AG04450 (cell line): ENCODE measurements at regions of chr3 and their contacts with region 1.

Region 1: DNA sequence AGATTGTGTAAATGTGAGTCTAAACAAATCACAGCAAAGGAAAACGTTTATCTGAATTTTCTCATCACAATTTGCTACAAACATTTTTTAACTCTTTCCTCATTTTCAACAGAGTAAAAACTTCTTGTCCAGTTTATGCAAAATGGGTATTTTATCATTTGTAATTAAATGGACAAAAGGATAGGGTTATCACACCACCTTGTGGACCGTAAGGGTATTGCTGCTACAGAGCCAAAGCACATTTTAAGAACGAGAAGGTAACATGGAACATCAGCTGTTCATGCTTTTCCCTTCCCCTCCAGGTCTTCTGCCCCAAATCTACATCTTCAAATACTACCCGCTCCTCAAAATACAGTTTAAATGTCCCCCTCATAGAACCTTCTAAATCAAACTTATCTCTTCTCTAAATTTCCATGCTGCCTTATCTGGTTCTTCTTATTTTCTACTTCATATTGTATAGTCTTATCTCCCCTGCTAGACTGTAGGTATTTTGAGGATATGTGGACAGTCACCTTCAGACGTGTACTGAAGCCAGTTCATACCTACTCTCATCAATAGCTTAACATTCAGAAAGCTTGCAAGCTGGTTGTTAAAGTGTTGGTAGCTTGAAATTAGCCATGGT is 12.8 kb upstream of the SETMAR start:
- DNase-seq: no peak
- H3K4me3 ChIP-seq: no peak overlapping the region
- H3K27ac ChIP-seq: no peak overlapping the region
- H3K27me3 ChIP-seq: no peaks in the 10 kb centered on the region
- CTCF ChIP-seq: peak; percentile 93

Region 2: GRCh38 chr3:3495611-3496010 is 794.8 kb before region 1 on chr3:
- CTCF ChIA-PET with region 1: no interaction called
- POLR2A ChIA-PET with region 1: no interaction called
- DNase-seq: no peak
- H3K4me3 ChIP-seq: no peak overlapping the region
- H3K27ac ChIP-seq: no peak overlapping the region
- H3K27me3 ChIP-seq: no peaks in the 10 kb centered on the region
- CTCF ChIP-seq: no peak

Region 3: GRCh38 chr3:4271834-4272233 is 18.5 kb before region 1 on chr3:
- CTCF ChIA-PET with region 1: interaction called, 10 read pairs
- POLR2A ChIA-PET with region 1: no interaction called
- DNase-seq: no peak
- H3K4me3 ChIP-seq: no peak overlapping the region
- H3K27ac ChIP-seq: no peak overlapping the region
- H3K27me3 ChIP-seq: no peaks in the 10 kb centered on the region
- CTCF ChIP-seq: peak; percentile 40

Region 4: DNA sequence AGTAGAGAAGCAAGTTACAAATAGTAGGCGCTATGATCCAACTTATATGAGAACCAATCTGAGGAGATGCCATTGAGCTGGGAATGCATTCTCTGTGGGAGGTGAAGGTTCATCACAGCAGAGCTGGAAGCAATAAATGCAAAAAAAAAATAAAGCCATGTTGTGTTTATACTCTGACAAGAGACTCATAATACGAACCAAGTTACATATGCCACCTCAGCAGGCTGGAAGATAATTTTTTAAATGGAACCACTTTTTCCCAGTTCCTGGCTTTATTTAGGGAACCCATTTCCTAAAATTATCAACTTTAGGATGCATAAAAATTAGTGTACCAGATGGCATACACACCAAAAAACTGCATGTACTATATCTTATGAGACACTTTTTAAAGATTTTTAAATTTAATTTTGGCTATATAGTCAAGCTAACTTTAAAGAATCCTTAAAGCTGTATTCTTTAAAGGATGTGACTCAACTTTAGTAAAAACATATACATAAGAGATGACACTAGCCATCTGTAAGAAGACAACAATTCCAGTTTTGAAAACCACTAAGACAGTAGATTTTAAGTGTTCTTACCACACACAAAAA is 10.8 kb before region 1 on chr3:
- CTCF ChIA-PET with region 1: interaction called, 12 read pairs
- POLR2A ChIA-PET with region 1: no interaction called
- DNase-seq: no peak
- H3K4me3 ChIP-seq: no peak overlapping the region
- H3K27ac ChIP-seq: no peak overlapping the region
- H3K27me3 ChIP-seq: no peaks in the 10 kb centered on the region
- CTCF ChIP-seq: no peak

Region 5: DNA sequence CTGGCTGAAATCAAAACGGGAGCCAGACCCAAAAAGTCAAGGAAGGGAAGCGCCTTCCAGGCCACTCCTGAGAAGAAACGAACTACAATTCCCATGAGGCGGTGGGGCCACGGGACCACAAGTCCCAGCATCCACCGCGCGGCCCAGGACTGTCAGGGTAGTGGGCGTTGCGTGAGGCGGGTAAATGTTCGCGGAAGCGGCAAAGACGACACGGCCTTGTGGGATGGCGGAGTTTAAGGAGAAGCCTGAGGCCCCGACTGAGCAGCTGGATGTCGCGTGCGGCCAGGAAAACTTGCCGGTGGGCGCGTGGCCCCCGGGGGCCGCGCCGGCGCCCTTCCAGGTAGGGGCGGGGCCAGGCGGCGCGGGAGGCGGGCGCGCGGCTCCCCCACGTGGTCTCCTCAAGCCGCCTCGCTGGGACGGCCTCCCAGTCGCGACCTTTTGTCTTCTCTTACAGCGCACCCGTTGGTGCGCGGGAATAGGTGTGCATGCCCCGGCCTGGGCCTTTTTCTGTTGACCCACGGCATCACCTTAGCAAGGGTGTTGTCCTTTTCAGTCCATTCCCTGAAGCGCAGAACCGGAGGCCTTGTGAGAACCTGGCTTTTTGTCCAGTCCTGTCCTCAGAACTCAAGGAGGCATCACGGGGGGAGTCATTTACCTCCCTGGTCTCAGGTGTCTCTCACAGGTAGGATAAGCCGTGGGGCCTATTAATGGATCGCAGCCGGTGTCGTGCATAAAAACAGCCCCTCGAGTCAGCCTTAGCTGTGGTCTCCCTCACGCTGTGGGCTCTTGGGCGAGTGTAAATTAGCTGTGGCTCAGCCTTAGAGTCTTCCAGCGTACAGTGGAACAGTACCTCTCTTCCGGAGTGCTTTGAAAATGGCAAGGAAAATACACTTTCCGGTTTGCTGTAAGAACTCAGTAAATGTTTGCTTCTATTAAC is 13.1 kb after region 1 on chr3 and contains the start of gene SETMAR:
- CTCF ChIA-PET with region 1: interaction called, 15 read pairs
- POLR2A ChIA-PET with region 1: no interaction called
- DNase-seq: peak; percentile 50
- H3K4me3 ChIP-seq: peak within 1 kb of the TSS; percentile 84
- H3K27ac ChIP-seq: peak within 1 kb of the TSS; percentile 67
- H3K27me3 ChIP-seq: no peaks in the 10 kb centered on the region
- CTCF ChIP-seq: no peak
- polyA plus RNA-seq, gene SETMAR: 15.5 and 16.8 TPM in 2 replicates